PC-3 (cell line): ENCODE measurements at regions of chr2 and their contacts with region 1.

Region 1: GRCh38 chr2:190376591-190377245 is 31.4 kb upstream of the MFSD6 start:
- DNase-seq: peak; percentile 40
- ATAC-seq: no peak; the same call in 1 of the 2 replicates
- H3K4me3 ChIP-seq: no peak overlapping the region
- H3K27ac ChIP-seq: no peak overlapping the region
- H3K4me1 ChIP-seq: peaks cover 16% of the 10 kb centered on the region
- H3K27me3 ChIP-seq: no peaks in the 10 kb centered on the region
- CTCF ChIP-seq: no peak

Region 2: DNA sequence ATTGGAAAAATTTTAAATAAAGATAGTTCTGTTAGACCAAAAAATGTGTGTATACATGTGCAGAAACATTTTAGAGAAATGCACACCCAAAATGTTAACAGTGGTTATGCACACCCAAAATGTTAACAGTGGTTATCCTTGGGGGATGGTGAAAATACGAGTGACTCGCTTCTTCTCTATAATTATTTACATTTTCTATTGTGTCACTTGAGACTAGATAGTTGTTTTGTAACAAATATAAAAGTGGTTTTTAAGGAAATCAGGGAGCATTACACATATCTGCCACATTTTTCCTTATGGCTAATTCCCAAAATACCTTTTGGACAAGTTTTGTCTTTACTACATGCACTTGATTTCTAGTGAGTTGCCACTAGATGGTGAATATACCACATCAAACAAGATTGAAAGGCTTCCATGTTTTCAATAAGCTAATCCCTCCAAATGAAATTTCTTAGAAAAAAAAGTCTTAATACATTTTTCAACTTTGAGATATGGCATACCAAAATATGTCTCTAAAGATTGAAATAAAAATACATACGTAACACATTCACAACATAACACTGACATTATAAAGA is 48.1 kb before region 1 on chr2:
- CTCF ChIA-PET with region 1: interaction called, 3 read pairs
- POLR2A ChIA-PET with region 1: no interaction called
- intact Hi-C with region 1: loop called (anchors 1 kb)
- DNase-seq: peak; percentile 22
- ATAC-seq: peak; percentile 35; the same call in 1 of the 2 replicates
- H3K4me3 ChIP-seq: no peak overlapping the region
- H3K27ac ChIP-seq: no peak overlapping the region
- H3K4me1 ChIP-seq: no peaks in the 10 kb centered on the region
- H3K27me3 ChIP-seq: no peaks in the 10 kb centered on the region
- CTCF ChIP-seq: peak; percentile 51

Region 3: GRCh38 chr2:190343500-190344275 is 33.0 kb before region 1 on chr2 and contains the start of gene INPP1:
- CTCF ChIA-PET with region 1: interaction called, 3 read pairs
- POLR2A ChIA-PET with region 1: no interaction called
- intact Hi-C with region 1: loop called (anchors 1 kb)
- DNase-seq: peak; percentile 46
- ATAC-seq: peak; percentile 67
- H3K4me3 ChIP-seq: peak within 1 kb of the TSS; percentile 94
- H3K27ac ChIP-seq: peak within 1 kb of the TSS; percentile 50
- H3K4me1 ChIP-seq: peaks cover 9% of the 10 kb centered on the region
- H3K27me3 ChIP-seq: no peaks in the 10 kb centered on the region
- CTCF ChIP-seq: no peak
- total RNA-seq, gene INPP1: 4.0 and 5.6 TPM in 2 replicates